AG04449 (cell line): ENCODE measurements at regions of chr2 and their contacts with region 1.

Region 1: GRCh38 chr2:180077295-180077906 is 70.3 kb upstream of the CWC22 start:
- DNase-seq: no peak
- H3K4me3 ChIP-seq: no peak overlapping the region
- CTCF ChIP-seq: peak; percentile 60

Region 2: GRCh38 chr2:178280244-178280852 is 1797.1 kb before region 1 on chr2:
- CTCF ChIA-PET with region 1: no interaction called
- POLR2A ChIA-PET with region 1: no interaction called
- DNase-seq: no peak
- H3K4me3 ChIP-seq: no peak overlapping the region
- CTCF ChIP-seq: peak; percentile 50

Region 3: GRCh38 chr2:179805001-179805400 is 272.4 kb before region 1 on chr2:
- CTCF ChIA-PET with region 1: no interaction called
- POLR2A ChIA-PET with region 1: no interaction called
- DNase-seq: no peak
- H3K4me3 ChIP-seq: no peak overlapping the region
- CTCF ChIP-seq: no peak

Region 4: DNA sequence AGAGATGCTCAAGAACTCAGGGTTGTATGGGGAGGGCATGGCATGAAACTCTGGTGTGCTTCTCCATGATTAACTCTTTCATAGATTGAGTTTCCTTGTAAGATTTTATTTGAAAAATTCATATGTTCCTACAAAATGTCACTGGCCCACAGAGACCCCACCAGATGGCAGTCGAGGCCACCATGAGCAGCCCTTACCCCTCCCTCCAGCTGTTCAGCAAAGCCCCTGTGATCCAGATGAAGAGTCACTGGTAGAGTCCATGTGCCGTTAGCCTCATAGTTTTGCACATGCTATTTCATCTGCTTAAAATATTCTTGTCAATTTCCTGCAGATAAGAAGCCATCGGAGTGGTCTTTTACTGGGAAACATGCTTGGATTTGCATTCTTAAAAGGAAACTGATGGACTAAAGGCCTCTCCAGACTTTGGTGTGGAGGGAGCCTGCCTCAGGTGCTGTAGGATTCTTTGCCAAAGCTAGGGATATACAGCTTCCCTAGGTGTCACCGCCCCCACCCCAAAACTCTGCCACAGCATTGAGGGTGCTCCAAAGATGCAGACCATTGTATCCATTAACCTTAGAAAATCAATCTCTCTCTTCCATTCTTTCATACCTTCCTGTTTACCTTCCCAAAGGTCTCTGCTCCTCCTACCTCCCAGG is 234.8 kb before region 1 on chr2:
- CTCF ChIA-PET with region 1: interaction called, 18 read pairs
- POLR2A ChIA-PET with region 1: no interaction called
- DNase-seq: no peak
- H3K4me3 ChIP-seq: no peak overlapping the region
- CTCF ChIP-seq: peak; percentile 35

Region 5: GRCh38 chr2:180099308-180099707 is 21.9 kb after region 1 on chr2:
- CTCF ChIA-PET with region 1: no interaction called
- POLR2A ChIA-PET with region 1: no interaction called
- DNase-seq: no peak
- H3K4me3 ChIP-seq: no peak overlapping the region
- CTCF ChIP-seq: no peak